Activated CD4-positive, alpha-beta memory T cell treated with anti-CD3 and anti-CD28 coated beads for 36 hours (primary cell): ENCODE measurements at regions of chr9 and their contacts with region 1.

Region 1: DNA sequence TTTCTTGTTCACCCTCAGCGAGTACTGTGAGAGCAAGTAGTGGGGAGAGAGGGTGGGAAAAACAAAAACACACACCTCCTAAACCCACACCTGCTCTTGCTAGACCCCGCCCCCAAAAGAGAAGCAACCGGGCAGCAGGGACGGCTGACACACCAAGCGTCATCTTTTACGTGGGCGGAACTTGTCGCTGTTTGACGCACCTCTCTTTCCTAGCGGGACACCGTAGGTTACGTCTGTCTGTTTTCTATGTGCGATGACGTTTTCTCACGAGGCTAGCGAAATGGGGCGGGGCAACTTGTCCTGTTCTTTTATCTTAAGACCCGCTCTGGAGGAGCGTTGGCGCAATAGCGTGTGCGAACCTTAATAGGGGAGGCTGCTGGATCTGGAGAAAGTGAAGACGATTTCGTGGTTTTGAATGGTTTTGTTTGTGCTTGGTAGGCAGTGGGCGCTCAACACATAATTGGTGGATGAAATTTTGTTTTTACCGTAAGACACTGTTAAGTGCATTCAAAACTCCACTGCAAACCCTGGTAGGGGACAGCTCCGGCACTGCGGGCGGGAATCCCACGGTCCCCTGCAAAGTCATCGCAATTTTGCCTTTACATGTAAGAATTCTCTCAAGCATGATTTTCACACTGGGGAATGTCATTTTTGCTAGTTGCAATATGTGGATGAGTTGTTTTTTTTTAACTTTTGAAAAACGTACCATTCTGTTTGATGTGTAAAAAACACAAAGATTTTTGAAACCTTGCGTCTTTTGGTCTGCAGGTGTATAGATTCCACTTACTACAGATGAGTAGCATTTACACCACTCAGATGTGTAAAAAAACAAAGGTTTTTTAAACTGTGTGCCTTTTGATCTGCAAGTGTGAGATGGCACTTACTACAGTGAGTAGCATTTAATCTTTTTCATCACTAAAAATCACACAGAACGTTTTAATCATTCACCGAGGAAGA is 631 bp upstream of the C9orf72 start:
- DNase-seq: peak; percentile 97
- H3K4me3 Mint-ChIP-seq: peak overlapping the region; percentile 91
- H3K27ac Mint-ChIP-seq: peak overlapping the region; percentile 100
- H3K4me1 Mint-ChIP-seq: peaks cover 29% of the 10 kb centered on the region
- H3K27me3 Mint-ChIP-seq: no peaks in the 10 kb centered on the region

Region 2: GRCh38 chr9:26892251-26893029 is 681.5 kb before region 1 on chr9 and contains the start of gene CAAP1:
- CTCF ChIA-PET with region 1: no interaction called
- POLR2A ChIA-PET with region 1: no interaction called
- intact Hi-C with region 1: loop called (anchors 1 kb)
- DNase-seq: peak; percentile 97
- H3K4me3 Mint-ChIP-seq: peak within 1 kb of the TSS; percentile 96
- H3K27ac Mint-ChIP-seq: peak within 1 kb of the TSS; percentile 99
- H3K4me1 Mint-ChIP-seq: peaks cover 28% of the 10 kb centered on the region
- H3K27me3 Mint-ChIP-seq: no peaks in the 10 kb centered on the region
- total RNA-seq, gene CAAP1: 18.2 to 18.8 TPM

Region 3: GRCh38 chr9:26946753-26947727 is 626.9 kb before region 1 on chr9 and contains the start of gene PLAA:
- CTCF ChIA-PET with region 1: no interaction called
- POLR2A ChIA-PET with region 1: no interaction called
- intact Hi-C with region 1: loop called (anchors 2 kb)
- DNase-seq: peak; percentile 91
- H3K4me3 Mint-ChIP-seq: peak within 1 kb of the TSS; percentile 90
- H3K27ac Mint-ChIP-seq: peak within 1 kb of the TSS; percentile 98
- H3K4me1 Mint-ChIP-seq: peaks cover 46% of the 10 kb centered on the region
- H3K27me3 Mint-ChIP-seq: peaks cover 5% of the 10 kb centered on the region
- total RNA-seq, gene PLAA: 32.2 to 32.3 TPM

Region 4: GRCh38 chr9:26955921-26956859 is 617.7 kb before region 1 on chr9 and contains the start of gene IFT74:
- CTCF ChIA-PET with region 1: no interaction called
- POLR2A ChIA-PET with region 1: no interaction called
- intact Hi-C with region 1: loop called (anchors 1 kb)
- DNase-seq: peak; percentile 96
- H3K4me3 Mint-ChIP-seq: peak within 1 kb of the TSS; percentile 85
- H3K27ac Mint-ChIP-seq: peak within 1 kb of the TSS; percentile 86
- H3K4me1 Mint-ChIP-seq: peaks cover 26% of the 10 kb centered on the region
- H3K27me3 Mint-ChIP-seq: no peaks in the 10 kb centered on the region
- total RNA-seq, gene IFT74: 10.9 to 11.2 TPM

Region 5: DNA sequence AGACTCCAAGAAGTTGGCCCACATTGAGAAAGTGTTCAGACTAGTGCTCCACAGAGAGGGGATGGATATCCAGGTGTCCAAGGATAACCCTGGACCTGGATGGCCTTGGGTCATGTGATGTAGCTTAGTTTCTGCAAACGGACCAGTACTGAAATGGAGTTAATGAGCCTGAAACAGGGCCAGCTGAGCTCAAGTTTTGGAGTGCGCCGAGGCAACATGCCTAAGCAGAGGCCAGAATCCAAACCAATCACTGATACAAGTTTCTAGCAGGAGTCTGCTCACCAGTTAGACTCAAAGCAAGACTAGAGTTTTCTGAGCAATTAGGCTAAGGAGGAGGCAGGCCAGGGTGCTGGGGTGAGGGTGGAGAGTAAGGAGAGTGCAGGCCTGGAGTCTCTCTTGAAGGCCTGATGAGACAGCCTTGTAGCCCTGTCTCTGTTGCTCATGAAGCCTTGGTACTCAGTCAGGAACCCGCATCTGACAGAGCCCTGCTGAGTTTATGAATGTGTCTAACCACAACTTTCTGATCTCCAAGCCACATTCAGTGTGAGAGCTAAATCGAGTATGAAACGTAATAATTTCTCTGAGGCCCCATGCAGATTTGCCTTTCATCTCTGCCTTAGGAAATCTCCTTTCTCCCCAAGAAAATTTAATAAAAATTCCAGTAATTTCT is 208.1 kb before region 1 on chr9:
- CTCF ChIA-PET with region 1: no interaction called
- POLR2A ChIA-PET with region 1: no interaction called
- intact Hi-C with region 1: loop called (anchors 1 kb)
- DNase-seq: peak; percentile 73
- H3K4me3 Mint-ChIP-seq: no peak overlapping the region
- H3K27ac Mint-ChIP-seq: no peak overlapping the region
- H3K4me1 Mint-ChIP-seq: peaks cover 26% of the 10 kb centered on the region
- H3K27me3 Mint-ChIP-seq: peaks cover 9% of the 10 kb centered on the region

Region 6: GRCh38 chr9:27701587-27701986 is 127.7 kb after region 1 on chr9:
- CTCF ChIA-PET with region 1: no interaction called
- POLR2A ChIA-PET with region 1: no interaction called
- intact Hi-C with region 1: no loop called
- DNase-seq: no peak
- H3K4me3 Mint-ChIP-seq: no peak overlapping the region
- H3K27ac Mint-ChIP-seq: no peak overlapping the region
- H3K4me1 Mint-ChIP-seq: no peaks in the 10 kb centered on the region
- H3K27me3 Mint-ChIP-seq: no peaks in the 10 kb centered on the region